ENCODE measurements at regions of chr18 and their contacts with region 1.

Region 1: DNA sequence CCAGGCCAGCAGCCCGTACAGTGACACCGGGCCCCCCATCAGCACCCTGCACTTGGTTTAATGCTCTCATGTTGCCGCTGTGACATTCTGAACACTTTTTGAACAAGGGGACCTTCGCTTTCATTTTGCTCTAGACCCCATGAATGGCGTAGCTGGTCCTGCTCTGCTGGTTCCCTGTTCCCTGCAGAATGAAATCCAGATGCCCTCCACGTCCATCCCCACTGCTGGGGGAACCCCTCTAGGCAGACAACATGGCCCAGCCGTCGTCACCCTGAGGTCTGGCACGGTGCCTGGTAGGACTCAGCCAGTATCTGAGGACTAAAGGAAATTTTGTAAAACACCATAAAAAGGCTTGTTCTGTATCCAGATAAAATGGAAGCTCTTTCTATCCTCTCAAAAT is 128.6 kb downstream of the KCTD1 start:
- DNase-seq: no peak
- H3K4me3 Mint-ChIP-seq: no peak overlapping the region
- H3K27ac Mint-ChIP-seq: no peak overlapping the region
- H3K4me1 Mint-ChIP-seq: no peaks in the 10 kb centered on the region
- H3K27me3 Mint-ChIP-seq: no peaks in the 10 kb centered on the region

Region 2: DNA sequence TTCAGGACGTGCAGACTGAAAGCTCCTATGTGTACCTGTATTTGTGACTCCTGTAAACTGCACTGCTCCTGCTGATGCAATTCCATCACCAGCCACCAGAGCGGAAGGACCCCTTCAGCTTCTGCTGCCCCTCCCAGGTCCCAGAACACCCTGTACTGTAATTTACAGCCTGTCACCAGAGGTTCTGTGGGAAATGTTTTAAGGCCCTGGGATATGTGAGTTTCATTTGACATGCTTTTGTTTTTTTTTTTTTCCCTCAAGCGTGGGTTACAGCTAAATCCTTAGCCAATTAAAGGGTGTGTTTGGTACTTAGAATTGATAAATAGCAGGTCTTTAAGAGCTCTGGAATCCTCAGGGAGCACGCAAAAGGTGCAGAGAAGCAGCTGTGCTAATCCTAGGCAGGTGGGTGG is 49.2 kb after region 1 on chr18:
- intact Hi-C with region 1: loop called (anchors 10 kb)
- DNase-seq: no peak
- H3K4me3 Mint-ChIP-seq: no peak overlapping the region
- H3K27ac Mint-ChIP-seq: no peak overlapping the region
- H3K4me1 Mint-ChIP-seq: no peaks in the 10 kb centered on the region
- H3K27me3 Mint-ChIP-seq: no peaks in the 10 kb centered on the region